Dendritic cell treated with granulocyte-macrophage colony-stimulating factor and Interleukin-4, amounts not matched to agents 40 ng/mL and 50 ng/mL, for 4 days (primary cell): ENCODE measurements at regions of chr15 and their contacts with region 1.

Region 1: DNA sequence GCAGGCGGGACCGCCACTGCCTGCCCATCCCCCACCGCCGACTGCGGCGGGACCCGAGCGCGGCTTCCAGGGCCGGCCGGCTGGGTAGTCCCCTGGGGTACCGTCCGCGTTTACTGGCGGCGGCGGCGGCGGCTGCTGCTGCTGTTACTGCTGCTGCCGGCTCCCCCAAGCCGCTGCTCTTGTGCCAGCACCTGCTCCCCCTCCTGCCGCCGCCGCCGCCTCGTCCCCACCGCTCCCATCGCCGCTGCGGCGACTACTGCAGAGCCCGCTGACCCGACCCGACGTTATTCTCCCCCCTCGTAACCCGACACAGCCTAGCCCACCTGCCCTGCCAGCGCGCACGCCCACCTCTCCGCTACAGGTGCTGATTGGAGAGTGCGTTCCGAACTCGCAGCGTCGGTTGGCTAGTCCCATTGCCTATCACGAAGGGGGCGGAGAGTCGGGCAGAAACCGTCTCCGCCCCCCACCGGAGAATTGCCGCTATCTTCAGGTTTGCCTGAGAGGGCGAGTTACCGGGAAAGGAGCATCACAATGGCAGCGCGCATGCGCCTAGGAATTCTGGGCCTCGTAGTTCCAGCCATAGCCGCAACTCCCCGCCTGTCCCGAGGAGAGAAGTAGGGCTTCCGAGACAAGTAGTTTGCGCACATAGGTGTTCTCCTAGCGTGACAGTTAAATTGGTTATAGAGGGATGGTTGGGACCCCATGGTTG is at the start of gene TTBK2:
- H3K4me3 Mint-ChIP-seq: peak within 1 kb of the TSS; percentile 95
- H3K27ac Mint-ChIP-seq: peak within 1 kb of the TSS; percentile 88
- H3K4me1 Mint-ChIP-seq: peaks cover 30% of the 10 kb centered on the region
- H3K27me3 Mint-ChIP-seq: peaks cover 4% of the 10 kb centered on the region

Region 2: GRCh38 chr15:42736793-42737528 is 183.7 kb before region 1 on chr15 and contains the start of gene CDAN1:
- intact Hi-C with region 1: loop called (anchors 10 kb)
- H3K4me3 Mint-ChIP-seq: peak within 1 kb of the TSS; percentile 76
- H3K27ac Mint-ChIP-seq: peak within 1 kb of the TSS; percentile 88
- H3K4me1 Mint-ChIP-seq: peaks cover 20% of the 10 kb centered on the region
- H3K27me3 Mint-ChIP-seq: no peaks in the 10 kb centered on the region

Region 3: DNA sequence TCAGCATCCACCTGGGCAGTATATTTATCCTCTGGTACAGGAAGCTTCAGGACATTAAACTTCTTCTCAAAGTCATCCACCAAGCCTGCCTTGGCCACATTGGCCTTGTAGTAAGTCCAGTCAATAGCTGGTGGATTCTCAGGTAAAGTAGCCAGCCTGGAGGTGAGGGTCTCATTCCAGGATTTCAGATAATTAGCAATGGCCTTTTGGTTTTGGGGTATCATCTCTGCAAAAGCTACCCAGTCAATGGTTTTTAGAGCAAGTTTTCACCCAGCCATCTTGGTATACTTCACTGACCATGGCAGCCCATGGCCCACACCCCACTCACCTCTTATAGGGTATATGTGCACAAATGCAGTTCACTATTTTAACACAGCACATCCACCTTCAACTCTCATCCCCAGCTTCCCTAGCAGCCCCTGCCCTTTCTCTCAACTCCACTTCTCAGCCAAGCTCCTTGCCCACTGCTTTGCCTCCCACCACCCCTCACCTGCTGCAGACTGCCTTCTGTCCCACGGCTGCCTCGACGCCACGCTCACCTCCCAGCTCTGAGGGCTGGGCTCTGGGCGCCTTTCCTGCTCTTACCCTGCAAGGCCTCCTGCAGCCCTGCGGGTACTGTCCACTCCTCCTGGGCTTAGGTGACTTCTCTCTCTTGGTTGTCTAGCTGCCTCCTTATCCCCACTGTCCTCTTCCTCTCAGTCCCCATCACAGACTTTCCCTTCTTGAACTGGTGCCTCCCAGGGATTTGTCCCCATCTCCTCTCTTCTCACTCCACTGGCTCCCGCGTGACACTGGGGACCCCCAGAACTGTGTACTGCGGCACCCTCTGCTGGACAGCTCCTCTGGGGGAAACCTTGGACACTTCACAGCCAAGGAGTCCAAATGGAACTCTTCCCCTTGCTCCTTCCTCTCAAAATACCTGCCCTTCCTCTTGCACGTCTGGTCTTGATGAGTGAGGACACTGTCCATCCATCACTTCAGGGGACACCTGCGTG is 347.7 kb after region 1 on chr15:
- intact Hi-C with region 1: no loop called
- H3K4me3 Mint-ChIP-seq: no peak overlapping the region
- H3K27ac Mint-ChIP-seq: no peak overlapping the region
- H3K4me1 Mint-ChIP-seq: peaks cover 12% of the 10 kb centered on the region
- H3K27me3 Mint-ChIP-seq: peaks cover 29% of the 10 kb centered on the region